ENCODE measurements at regions of chr2 and their contacts with region 1.

Region 1: GRCh38 chr2:96773922-96774321 is 13.2 kb downstream of the CNNM4 start:
- DNase-seq: peak; percentile 65
- H3K4me3 Mint-ChIP-seq: peak overlapping the region; percentile 62
- H3K27ac Mint-ChIP-seq: no peak overlapping the region
- H3K4me1 Mint-ChIP-seq: peaks cover 18% of the 10 kb centered on the region
- H3K27me3 Mint-ChIP-seq: no peaks in the 10 kb centered on the region

Region 2: GRCh38 chr2:95379371-95379831 is 1394.5 kb before region 1 on chr2:
- CTCF ChIA-PET with region 1: no interaction called
- POLR2A ChIA-PET with region 1: no interaction called
- intact Hi-C with region 1: no loop called
- DNase-seq: no peak
- H3K4me3 Mint-ChIP-seq: no peak overlapping the region
- H3K27ac Mint-ChIP-seq: no peak overlapping the region
- H3K4me1 Mint-ChIP-seq: no peaks in the 10 kb centered on the region
- H3K27me3 Mint-ChIP-seq: peaks cover 6% of the 10 kb centered on the region

Region 3: DNA sequence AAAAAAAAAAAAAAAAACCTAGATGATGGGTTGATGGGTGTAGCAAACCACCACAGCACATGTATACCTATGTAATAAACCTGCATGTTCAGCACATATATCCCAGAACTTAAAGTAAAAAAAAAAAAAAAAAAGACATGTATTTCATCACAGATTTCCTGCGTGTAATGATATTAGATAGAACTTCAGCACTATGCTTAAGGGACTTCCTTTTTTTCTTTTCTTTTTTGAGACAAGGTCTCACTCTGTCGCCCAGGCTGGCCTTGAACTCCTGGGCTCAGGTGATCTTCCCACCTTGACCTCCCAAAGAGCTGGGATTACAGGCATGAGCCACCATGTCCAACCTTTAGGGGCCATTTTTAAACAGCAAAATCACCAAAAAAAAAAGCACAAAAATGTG is 310.8 kb before region 1 on chr2:
- CTCF ChIA-PET with region 1: no interaction called
- POLR2A ChIA-PET with region 1: no interaction called
- intact Hi-C with region 1: no loop called
- DNase-seq: no peak
- H3K4me3 Mint-ChIP-seq: no peak overlapping the region
- H3K27ac Mint-ChIP-seq: no peak overlapping the region
- H3K4me1 Mint-ChIP-seq: no peaks in the 10 kb centered on the region
- H3K27me3 Mint-ChIP-seq: no peaks in the 10 kb centered on the region

Region 4: GRCh38 chr2:96739633-96740428 is 34.1 kb before region 1 on chr2 and contains the start of gene LMAN2L:
- CTCF ChIA-PET with region 1: no interaction called
- POLR2A ChIA-PET with region 1: no interaction called
- intact Hi-C with region 1: no loop called
- DNase-seq: peak; percentile 99
- H3K4me3 Mint-ChIP-seq: peak within 1 kb of the TSS; percentile 92
- H3K27ac Mint-ChIP-seq: peak within 1 kb of the TSS; percentile 52
- H3K4me1 Mint-ChIP-seq: peaks cover 35% of the 10 kb centered on the region
- H3K27me3 Mint-ChIP-seq: no peaks in the 10 kb centered on the region
- total RNA-seq, gene LMAN2L: 5.7 to 6.1 TPM

Region 5: DNA sequence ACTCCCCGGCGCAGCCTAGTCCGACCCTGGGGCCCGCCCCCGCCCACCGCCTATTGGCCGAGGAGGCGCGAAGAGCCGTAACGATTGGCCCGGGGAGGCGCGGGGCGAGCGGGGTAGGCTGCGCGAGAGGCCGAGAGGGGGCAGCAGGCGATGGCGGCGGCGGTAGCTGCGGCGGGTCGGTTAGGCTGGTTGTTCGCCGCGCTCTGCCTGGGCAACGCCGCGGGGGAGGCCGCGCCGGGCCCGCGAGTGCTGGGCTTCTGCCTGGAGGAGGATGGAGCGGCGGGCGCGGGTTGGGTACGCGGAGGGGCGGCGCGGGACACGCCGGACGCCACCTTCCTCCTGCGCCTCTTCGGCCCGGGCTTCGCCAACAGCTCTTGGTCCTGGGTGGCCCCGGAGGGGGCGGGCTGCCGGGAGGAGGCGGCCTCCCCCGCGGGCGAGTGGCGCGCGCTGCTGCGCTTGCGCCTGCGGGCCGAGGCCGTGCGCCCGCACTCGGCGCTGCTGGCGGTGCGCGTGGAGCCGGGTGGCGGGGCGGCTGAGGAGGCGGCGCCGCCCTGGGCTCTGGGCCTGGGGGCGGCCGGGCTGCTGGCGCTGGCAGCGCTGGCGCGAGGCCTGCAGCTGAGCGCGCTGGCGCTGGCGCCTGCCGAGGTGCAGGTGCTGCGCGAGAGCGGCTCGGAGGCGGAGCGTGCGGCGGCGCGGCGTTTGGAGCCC is 42.4 kb after region 1 on chr2 and contains the start of gene CNNM3:
- CTCF ChIA-PET with region 1: interaction called, 3 read pairs
- POLR2A ChIA-PET with region 1: interaction called, 5 read pairs
- intact Hi-C with region 1: loop called (anchors 1 kb)
- DNase-seq: peak; percentile 97
- H3K4me3 Mint-ChIP-seq: peak within 1 kb of the TSS; percentile 82
- H3K27ac Mint-ChIP-seq: peak within 1 kb of the TSS; percentile 77
- H3K4me1 Mint-ChIP-seq: peaks cover 60% of the 10 kb centered on the region
- H3K27me3 Mint-ChIP-seq: no peaks in the 10 kb centered on the region
- total RNA-seq, gene CNNM3: 16.3 to 22.2 TPM

Region 6: DNA sequence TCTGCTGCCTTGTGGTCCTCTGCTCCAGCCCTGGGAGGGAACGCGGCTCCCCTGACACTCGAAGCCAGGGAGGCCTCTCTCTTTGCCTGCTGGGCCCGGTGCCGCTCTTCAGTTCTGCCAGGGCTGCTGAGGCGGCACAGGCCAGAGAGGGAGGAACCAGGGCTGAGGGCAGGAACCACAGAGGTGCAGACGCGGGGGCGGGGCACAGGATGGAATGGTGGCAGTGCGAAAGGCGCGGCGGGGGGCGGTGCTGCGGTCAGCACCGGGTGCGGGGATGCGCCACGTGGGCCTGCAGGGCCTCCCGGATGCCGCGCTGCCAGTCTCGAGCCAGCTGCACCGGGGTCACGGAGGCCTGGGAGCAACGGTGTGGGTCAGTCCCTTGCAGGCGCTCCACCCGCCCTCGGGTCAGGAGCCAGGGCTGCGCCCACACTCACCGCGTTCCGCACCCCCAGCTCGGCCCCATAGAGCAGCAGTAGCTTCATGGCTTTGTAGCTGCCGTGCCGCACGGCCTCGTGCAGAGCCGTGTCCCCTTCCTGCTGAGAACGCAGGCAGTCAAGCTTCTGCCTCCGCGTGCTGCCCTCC is 65.5 kb after region 1 on chr2:
- CTCF ChIA-PET with region 1: no interaction called
- POLR2A ChIA-PET with region 1: no interaction called
- intact Hi-C with region 1: no loop called
- DNase-seq: peak; percentile 90
- H3K4me3 Mint-ChIP-seq: no peak overlapping the region
- H3K27ac Mint-ChIP-seq: peak overlapping the region; percentile 42
- H3K4me1 Mint-ChIP-seq: peaks cover 20% of the 10 kb centered on the region
- H3K27me3 Mint-ChIP-seq: no peaks in the 10 kb centered on the region

Measured in activated CD4-positive, alpha-beta memory T cell treated with anti-CD3 and anti-CD28 coated beads for 36 hours (primary cell).